ENCODE measurements at regions of chr11 and their contacts with region 1.

Region 1: DNA sequence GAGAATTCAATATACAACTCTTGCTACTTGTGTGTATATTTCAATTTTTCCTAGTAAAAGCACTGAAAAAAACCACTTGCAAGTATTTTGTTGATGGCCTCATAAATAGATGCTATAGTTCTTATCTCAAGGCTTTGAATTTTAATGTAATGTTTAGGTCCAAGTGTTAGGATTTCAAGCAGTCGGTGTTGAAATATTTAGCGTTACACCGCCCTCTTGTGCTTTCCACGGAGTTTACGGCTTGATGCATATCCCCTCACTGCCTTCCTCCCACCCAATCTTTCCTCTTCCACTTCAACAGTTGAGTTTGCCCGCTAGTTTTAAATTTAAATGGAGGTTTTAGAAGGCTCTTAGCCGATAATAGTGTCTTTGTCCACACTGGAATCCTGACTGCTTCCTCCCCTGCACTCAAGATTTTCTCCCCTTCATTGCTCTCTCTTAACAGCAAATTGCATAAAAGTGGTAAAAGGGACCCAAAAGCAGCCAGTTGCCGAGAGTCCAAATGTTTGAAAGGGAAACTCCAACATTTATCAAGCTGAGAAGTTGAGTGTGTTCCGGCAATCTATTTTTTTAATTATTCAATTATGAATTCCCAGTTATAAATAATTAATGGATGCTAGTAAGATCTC is 25.9 kb upstream of the HTATIP2 start:
- DNase-seq: peak in 2 of 4 experiments; percentile 30 to 46
- ATAC-seq: peak; percentile 90
- H3K4me3 ChIP-seq: no peak overlapping the region
- H3K27ac ChIP-seq: no peak overlapping the region
- H3K4me1 ChIP-seq: peaks cover 0 to 4% of the 10 kb centered on the region in 2 experiments; a peak in 2 of 5 replicates
- H3K27me3 ChIP-seq: peaks cover 3 to 16% of the 10 kb centered on the region in 2 experiments; a peak in 4 of 5 replicates
- CTCF ChIP-seq: peak; percentile 40 to 55 (median 53)
- EP300 ChIP-seq: no peak
- POLR2A ChIP-seq: no peak
- RAD21 ChIP-seq: peak in 1 of 2 experiments; percentile 62; a peak in 2 of 4 replicates

Region 2: DNA sequence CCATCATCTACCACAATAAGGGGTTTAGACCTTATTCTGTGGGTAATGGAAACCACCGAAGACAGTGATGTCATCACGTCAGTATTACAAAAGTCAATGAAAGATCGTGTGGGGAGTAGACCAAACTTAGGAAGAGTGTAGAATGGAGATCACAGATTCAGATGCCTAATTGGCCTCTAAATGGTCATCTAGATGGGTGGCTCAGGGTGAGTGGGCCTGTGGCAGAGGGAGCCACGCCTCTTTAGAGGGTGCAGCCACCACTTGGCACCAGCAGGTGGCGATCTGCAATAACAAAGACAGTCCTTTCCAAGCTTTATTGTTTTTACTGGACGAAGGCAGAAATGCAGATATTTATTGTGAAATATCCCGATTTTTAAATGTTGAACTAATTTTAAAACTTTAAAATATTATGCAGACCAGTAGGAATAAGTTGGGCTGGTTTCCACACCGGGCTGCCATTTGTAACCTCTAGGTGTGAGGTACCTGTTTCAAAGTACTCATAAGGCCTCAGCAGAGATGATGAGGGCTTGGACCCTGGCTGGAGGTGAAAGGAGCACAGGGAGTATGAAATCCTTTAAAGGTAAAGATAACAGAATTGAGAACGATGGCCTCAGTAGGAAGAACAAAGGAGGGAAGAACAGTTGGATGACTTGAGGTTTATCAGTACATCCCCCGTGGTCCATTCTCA is 399.3 kb before region 1 on chr11:
- CTCF ChIA-PET with region 1: interaction called, 5 read pairs
- POLR2A ChIA-PET with region 1: no interaction called
- in situ Hi-C with region 1: loop called (anchors 10 kb)
- intact Hi-C with region 1: loop called (anchors 5 kb)
- DNase-seq: peak; percentile 70 to 84 (median 79)
- ATAC-seq: peak; percentile 92
- H3K4me3 ChIP-seq: no peak overlapping the region
- H3K27ac ChIP-seq: no peak overlapping the region
- H3K4me1 ChIP-seq: no peaks in the 10 kb centered on the region; a peak in 1 of 5 replicates
- H3K27me3 ChIP-seq: peaks cover 8 to 42% of the 10 kb centered on the region in 2 experiments
- CTCF ChIP-seq: peak; percentile 86 to 89 (median 88)
- EP300 ChIP-seq: no peak
- POLR2A ChIP-seq: no peak
- RAD21 ChIP-seq: peak; percentile 75 to 84

Region 3: DNA sequence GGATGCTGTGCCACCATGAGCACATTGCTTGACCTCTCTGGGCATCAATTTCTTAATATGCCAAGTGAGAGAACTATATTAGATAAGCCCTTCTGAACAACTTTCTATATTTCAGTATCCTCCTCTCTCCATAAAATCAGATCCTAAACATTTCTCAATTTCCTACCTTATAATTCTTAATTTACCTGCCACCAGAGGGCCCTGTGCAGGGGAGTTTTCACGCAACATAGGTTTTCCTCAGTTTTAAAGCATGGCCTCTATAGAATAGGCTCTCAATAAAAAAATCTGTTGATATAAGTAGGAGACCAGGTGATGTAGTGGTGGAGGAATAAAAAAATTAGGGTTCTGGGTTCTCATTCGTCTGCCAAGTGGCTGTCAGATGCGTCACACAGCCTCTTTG is 93.7 kb before region 1 on chr11:
- CTCF ChIA-PET with region 1: no interaction called
- POLR2A ChIA-PET with region 1: no interaction called
- in situ Hi-C with region 1: no loop called
- intact Hi-C with region 1: loop called (anchors 5 kb)
- DNase-seq: peak in 1 of 4 experiments; percentile 11
- ATAC-seq: peak; percentile 62
- H3K4me3 ChIP-seq: no peak overlapping the region
- H3K27ac ChIP-seq: no peak overlapping the region
- H3K4me1 ChIP-seq: no peaks in the 10 kb centered on the region
- H3K27me3 ChIP-seq: peaks cover 4 to 17% of the 10 kb centered on the region in 2 experiments; a peak in 3 of 5 replicates
- CTCF ChIP-seq: peak; percentile 30 to 52 (median 48); a peak in 5 of 6 replicates
- EP300 ChIP-seq: no peak
- POLR2A ChIP-seq: no peak
- RAD21 ChIP-seq: peak in 1 of 2 experiments; percentile 24; a peak in 1 of 4 replicates

Region 4: GRCh38 chr11:20289732-20290131 is 47.9 kb before region 1 on chr11:
- CTCF ChIA-PET with region 1: no interaction called
- POLR2A ChIA-PET with region 1: no interaction called
- in situ Hi-C with region 1: no loop called
- intact Hi-C with region 1: no loop called
- DNase-seq: no peak
- ATAC-seq: no peak
- H3K4me3 ChIP-seq: no peak overlapping the region
- H3K27ac ChIP-seq: no peak overlapping the region
- H3K4me1 ChIP-seq: no peaks in the 10 kb centered on the region
- H3K27me3 ChIP-seq: no peaks in the 10 kb centered on the region; a peak in 1 of 5 replicates
- CTCF ChIP-seq: no peak
- EP300 ChIP-seq: no peak
- POLR2A ChIP-seq: no peak
- RAD21 ChIP-seq: no peak

Region 5: DNA sequence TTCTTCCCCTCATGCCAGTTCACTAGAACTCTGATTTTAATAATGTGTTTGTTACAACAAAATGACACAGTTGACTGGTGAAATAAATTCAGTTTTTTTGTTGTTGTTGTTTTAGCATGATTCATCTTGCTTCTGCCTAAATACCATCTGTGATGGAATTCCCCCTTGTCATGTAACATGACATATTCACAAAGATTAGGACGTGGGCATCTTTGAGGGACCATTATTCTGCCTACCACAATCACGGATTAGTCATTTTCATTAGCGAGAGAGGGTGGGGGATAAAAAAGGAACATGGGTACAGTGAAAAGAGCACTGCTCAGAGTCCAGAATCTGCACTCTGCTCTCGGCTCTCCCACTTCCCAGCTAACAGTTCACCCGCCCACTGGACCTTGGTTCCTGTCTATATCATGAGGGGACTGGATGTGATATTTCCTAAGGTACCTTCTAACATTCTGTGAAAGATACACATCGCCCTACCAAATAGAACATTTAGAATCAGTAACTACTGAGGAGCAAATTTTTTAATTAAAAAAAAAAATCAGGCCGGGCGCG is 37.2 kb after region 1 on chr11:
- CTCF ChIA-PET with region 1: no interaction called
- POLR2A ChIA-PET with region 1: no interaction called
- in situ Hi-C with region 1: no loop called
- intact Hi-C with region 1: no loop called
- DNase-seq: no peak
- ATAC-seq: no peak
- H3K4me3 ChIP-seq: no peak overlapping the region
- H3K27ac ChIP-seq: no peak overlapping the region
- H3K4me1 ChIP-seq: peaks cover 0 to 6% of the 10 kb centered on the region in 2 experiments; a peak in 3 of 5 replicates
- H3K27me3 ChIP-seq: no peaks in the 10 kb centered on the region
- CTCF ChIP-seq: no peak
- EP300 ChIP-seq: no peak
- POLR2A ChIP-seq: no peak
- RAD21 ChIP-seq: no peak

Region 6: DNA sequence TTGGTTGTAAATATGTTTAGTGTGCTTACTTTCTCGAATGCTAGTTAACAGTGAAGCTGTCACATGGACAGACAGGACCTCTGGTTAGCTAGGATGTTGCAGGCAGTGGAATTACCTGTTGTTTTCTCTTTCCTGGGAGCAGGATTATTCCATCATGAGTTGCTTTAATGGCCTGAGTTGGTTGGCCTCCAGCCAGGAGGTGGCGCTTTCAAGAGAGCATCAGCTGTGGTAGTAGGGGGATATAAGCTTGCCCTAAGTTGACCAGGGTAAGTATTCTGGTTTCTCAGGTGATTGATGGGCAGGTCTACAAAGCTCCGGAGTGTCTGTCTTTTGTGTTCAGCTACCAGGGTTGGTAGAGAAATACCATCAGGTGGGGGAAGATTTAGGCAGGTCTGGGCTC is 375.3 kb after region 1 on chr11:
- CTCF ChIA-PET with region 1: no interaction called
- POLR2A ChIA-PET with region 1: no interaction called
- in situ Hi-C with region 1: no loop called
- intact Hi-C with region 1: no loop called
- DNase-seq: no peak
- ATAC-seq: no peak
- H3K4me3 ChIP-seq: no peak overlapping the region
- H3K27ac ChIP-seq: no peak overlapping the region
- H3K4me1 ChIP-seq: no peaks in the 10 kb centered on the region
- H3K27me3 ChIP-seq: no peaks in the 10 kb centered on the region
- CTCF ChIP-seq: no peak
- EP300 ChIP-seq: no peak
- POLR2A ChIP-seq: no peak
- RAD21 ChIP-seq: no peak

Region 7: GRCh38 chr11:20771681-20772080 is 434.0 kb after region 1 on chr11:
- CTCF ChIA-PET with region 1: no interaction called
- POLR2A ChIA-PET with region 1: no interaction called
- in situ Hi-C with region 1: no loop called
- intact Hi-C with region 1: no loop called
- DNase-seq: no peak
- ATAC-seq: no peak
- H3K4me3 ChIP-seq: no peak overlapping the region
- H3K27ac ChIP-seq: no peak overlapping the region
- H3K4me1 ChIP-seq: no peaks in the 10 kb centered on the region
- H3K27me3 ChIP-seq: no peaks in the 10 kb centered on the region
- CTCF ChIP-seq: no peak
- EP300 ChIP-seq: no peak
- POLR2A ChIP-seq: no peak
- RAD21 ChIP-seq: no peak